Activated CD8-positive, alpha-beta T cell treated with anti-CD3 and anti-CD28 coated beads for 36 hours (primary cell): ENCODE measurements at regions of chr6 and their contacts with region 1.

Region 1: GRCh38 chr6:6676910-6677441 is 88.5 kb downstream of the LY86 start:
- DNase-seq: peak; percentile 87
- ATAC-seq: peak; percentile 93
- H3K4me3 Mint-ChIP-seq: peak overlapping the region; percentile 19
- H3K27ac Mint-ChIP-seq: no peak overlapping the region
- H3K4me1 Mint-ChIP-seq: peaks cover 6% of the 10 kb centered on the region
- H3K27me3 Mint-ChIP-seq: no peaks in the 10 kb centered on the region
- CTCF ChIP-seq: peak; percentile 98

Region 2: GRCh38 chr6:6474170-6474920 is 202.6 kb before region 1 on chr6:
- CTCF ChIA-PET with region 1: no interaction called
- POLR2A ChIA-PET with region 1: no interaction called
- intact Hi-C with region 1: no loop called
- DNase-seq: no peak
- ATAC-seq: no peak
- H3K4me3 Mint-ChIP-seq: no peak overlapping the region
- H3K27ac Mint-ChIP-seq: no peak overlapping the region
- H3K4me1 Mint-ChIP-seq: no peaks in the 10 kb centered on the region
- H3K27me3 Mint-ChIP-seq: peaks cover 7% of the 10 kb centered on the region
- CTCF ChIP-seq: no peak

Region 3: DNA sequence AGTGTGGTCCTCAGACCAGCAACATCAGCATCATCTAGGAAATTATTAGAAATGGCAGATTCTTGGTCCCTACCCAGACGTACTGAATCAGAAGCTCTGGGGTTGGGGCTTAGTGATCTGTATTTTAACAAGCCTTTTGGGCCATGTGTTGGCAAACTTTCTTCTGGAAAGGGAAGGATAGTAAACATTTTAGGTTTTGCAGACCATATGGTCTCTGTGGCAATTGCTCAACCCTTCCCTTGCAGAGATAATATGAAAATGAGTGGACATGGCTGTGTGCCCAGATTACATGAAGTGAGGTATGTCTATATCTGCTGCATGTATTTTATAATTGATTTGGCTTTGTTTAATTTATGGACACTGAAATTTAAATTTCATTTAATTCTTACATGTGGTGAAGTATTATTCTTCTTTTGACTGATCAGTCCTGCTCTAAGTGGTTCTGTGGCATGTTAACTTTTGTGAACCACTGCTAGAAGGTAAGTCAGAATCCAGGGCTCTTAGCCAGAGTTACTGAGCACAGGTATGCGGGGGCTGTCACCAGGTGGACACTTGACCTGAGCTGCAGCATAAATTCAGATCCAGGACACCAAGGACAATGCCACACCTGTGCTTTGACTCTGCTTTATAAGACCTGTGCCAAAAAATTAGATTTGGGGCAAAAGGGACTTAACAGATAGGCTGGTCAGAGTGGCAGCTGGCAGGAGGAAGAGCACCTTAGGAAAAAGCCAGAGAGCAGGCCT is 45.3 kb before region 1 on chr6:
- CTCF ChIA-PET with region 1: no interaction called
- POLR2A ChIA-PET with region 1: no interaction called
- intact Hi-C with region 1: no loop called
- DNase-seq: no peak
- ATAC-seq: no peak
- H3K4me3 Mint-ChIP-seq: no peak overlapping the region
- H3K27ac Mint-ChIP-seq: no peak overlapping the region
- H3K4me1 Mint-ChIP-seq: peaks cover 24% of the 10 kb centered on the region
- H3K27me3 Mint-ChIP-seq: no peaks in the 10 kb centered on the region
- CTCF ChIP-seq: no peak

Region 4: DNA sequence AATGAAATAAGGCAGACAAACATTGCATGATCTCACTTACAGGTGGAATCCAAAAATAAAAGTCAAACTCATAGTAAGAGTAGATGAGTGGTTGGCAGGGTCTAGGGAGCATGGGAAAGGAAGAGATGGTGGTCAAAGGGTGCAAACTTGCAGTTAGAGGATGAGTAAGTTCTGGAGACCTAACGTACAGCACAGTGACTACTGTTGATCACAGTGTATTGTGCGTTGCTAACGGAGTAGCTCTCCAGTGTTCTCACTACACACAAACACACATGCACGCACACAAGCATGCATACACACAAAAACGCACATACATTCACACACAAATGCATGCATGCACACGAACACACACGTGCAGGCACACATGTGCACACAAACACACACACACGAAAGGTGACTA is 33.6 kb before region 1 on chr6:
- CTCF ChIA-PET with region 1: no interaction called
- POLR2A ChIA-PET with region 1: no interaction called
- intact Hi-C with region 1: no loop called
- DNase-seq: no peak
- ATAC-seq: peak; percentile 72
- H3K4me3 Mint-ChIP-seq: no peak overlapping the region
- H3K27ac Mint-ChIP-seq: no peak overlapping the region
- H3K4me1 Mint-ChIP-seq: peaks cover 4% of the 10 kb centered on the region
- H3K27me3 Mint-ChIP-seq: no peaks in the 10 kb centered on the region
- CTCF ChIP-seq: no peak

Region 5: DNA sequence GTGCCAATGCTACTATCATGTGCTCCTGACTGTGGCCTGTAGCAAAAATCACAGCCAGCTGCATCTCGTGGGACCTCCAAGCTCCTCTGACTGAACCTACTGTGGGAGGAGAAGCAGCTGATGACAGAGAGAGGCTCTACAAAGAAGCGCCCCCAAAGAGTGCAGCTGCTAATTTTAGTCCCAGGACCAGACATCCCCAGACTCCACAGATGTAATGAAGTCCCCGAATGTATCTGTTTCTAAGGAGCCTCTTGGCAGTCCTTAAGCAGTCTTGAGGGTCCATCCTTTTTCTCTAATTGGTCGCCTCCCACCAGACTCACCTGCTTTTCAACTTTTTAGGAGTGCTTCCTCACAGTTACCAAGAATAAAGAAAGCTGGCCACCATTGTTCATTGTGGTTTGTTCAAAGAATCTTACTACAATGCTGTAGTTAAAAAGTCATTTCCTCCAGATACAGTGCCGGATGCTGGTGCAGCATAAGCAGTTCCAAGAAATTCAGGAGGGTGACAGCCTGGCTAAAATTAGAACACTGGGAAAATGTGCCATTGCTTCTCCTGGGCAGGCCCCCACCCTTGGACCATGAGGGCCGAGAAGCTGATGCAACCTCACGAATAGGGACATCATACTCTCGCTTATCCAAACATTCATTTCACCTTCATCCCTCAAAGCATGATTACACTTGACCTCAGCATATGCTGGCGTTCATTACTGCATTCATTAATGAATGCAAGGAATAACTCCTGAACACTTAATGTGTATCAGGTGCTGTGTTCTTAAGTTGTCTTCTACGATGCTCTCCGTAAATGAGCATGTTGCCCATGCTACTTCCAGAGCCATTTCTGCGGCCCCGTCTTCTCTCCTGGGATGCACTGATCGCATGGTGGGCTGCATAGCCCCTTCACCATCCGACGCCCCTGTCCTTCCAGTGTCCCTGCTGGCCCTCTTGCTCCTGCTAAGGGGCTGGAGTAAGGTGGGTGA is 22.1 kb before region 1 on chr6:
- CTCF ChIA-PET with region 1: interaction called, 71 read pairs
- POLR2A ChIA-PET with region 1: no interaction called
- intact Hi-C with region 1: no loop called
- DNase-seq: peak; percentile 72
- ATAC-seq: peak; percentile 68
- H3K4me3 Mint-ChIP-seq: peak overlapping the region; percentile 39
- H3K27ac Mint-ChIP-seq: peak overlapping the region; percentile 98
- H3K4me1 Mint-ChIP-seq: peaks cover 76% of the 10 kb centered on the region
- H3K27me3 Mint-ChIP-seq: no peaks in the 10 kb centered on the region
- CTCF ChIP-seq: no peak

Region 6: DNA sequence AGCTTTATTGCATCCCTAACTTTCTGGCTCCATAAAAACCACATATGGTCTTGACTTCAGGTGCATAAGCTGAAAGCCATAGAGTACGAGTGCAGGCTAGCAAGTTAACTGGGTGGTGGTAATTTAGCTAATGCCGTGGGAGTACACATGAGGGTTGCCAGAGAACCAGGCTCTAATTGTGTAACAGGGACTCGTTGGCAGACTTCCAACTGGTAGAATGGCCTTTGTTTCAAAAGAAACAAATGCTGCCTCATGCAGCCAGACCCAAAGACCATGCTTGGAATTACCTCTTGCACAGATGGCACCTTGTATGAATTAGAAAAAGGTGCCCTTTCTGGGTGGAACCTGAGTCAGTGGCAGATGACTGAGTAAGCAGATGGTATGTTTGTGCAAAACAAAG is 15.3 kb before region 1 on chr6:
- CTCF ChIA-PET with region 1: interaction called, 71 read pairs
- POLR2A ChIA-PET with region 1: no interaction called
- intact Hi-C with region 1: no loop called
- DNase-seq: no peak
- ATAC-seq: no peak
- H3K4me3 Mint-ChIP-seq: no peak overlapping the region
- H3K27ac Mint-ChIP-seq: no peak overlapping the region
- H3K4me1 Mint-ChIP-seq: peaks cover 33% of the 10 kb centered on the region
- H3K27me3 Mint-ChIP-seq: peaks cover 1% of the 10 kb centered on the region
- CTCF ChIP-seq: no peak

Region 7: GRCh38 chr6:6696867-6697531 is 20.0 kb after region 1 on chr6:
- CTCF ChIA-PET with region 1: interaction called, 14 read pairs
- POLR2A ChIA-PET with region 1: interaction called, 3 read pairs
- intact Hi-C with region 1: no loop called
- DNase-seq: peak; percentile 69
- ATAC-seq: peak; percentile 45
- H3K4me3 Mint-ChIP-seq: no peak overlapping the region
- H3K27ac Mint-ChIP-seq: no peak overlapping the region
- H3K4me1 Mint-ChIP-seq: no peaks in the 10 kb centered on the region
- H3K27me3 Mint-ChIP-seq: peaks cover 10% of the 10 kb centered on the region
- CTCF ChIP-seq: peak; percentile 73

Region 8: GRCh38 chr6:6724539-6725467 is 47.8 kb after region 1 on chr6:
- CTCF ChIA-PET with region 1: interaction called, 13 read pairs
- POLR2A ChIA-PET with region 1: no interaction called
- intact Hi-C with region 1: no loop called
- DNase-seq: peak; percentile 72
- ATAC-seq: peak; percentile 81
- H3K4me3 Mint-ChIP-seq: peak overlapping the region; percentile 20
- H3K27ac Mint-ChIP-seq: no peak overlapping the region
- H3K4me1 Mint-ChIP-seq: peaks cover 5% of the 10 kb centered on the region
- H3K27me3 Mint-ChIP-seq: peaks cover 8% of the 10 kb centered on the region
- CTCF ChIP-seq: peak; percentile 45

Region 9: DNA sequence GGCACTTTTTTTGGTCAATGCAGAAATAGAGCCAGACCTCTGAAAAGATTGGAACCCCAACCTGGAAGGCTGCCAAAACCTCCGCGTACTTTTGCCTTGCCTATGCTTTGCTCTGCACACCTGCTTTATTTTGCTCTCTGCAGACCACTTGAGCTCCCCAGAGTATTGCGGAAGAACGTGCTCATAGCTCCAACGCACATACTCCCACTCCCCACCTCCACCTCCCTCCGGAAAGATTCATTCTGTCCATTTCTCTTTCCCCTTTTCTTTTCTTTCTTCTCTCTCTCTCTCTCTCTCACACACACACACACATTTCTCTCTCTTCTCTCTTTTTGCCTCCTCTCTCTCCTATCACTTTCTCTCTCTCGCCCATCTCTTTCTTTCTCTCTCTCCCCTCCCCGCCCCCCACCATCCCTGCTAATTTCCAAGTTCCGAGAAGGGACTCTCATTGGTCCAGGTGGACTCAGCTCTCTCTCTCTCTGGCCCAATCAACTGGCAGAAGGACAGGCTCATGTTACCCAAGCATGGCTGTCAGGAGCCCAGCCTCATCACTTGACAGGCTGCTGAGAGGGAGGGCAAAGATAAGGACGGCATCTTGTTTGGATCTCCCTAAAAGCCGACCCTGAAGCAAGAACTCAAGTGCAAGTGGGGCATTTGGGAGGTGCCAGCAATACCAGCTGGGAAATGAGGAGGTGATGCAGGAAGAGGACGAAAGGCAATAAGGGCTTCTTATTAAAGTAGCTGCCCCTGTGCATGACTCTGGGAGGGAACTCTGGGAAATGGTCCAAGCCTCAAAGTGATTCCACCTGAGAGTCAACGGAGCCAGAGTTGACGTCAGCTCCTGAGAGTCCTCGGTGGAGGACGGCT is 157.6 kb after region 1 on chr6:
- CTCF ChIA-PET with region 1: no interaction called
- POLR2A ChIA-PET with region 1: no interaction called
- intact Hi-C with region 1: no loop called
- DNase-seq: no peak
- ATAC-seq: no peak
- H3K4me3 Mint-ChIP-seq: no peak overlapping the region
- H3K27ac Mint-ChIP-seq: no peak overlapping the region
- H3K4me1 Mint-ChIP-seq: no peaks in the 10 kb centered on the region
- H3K27me3 Mint-ChIP-seq: peaks cover 15% of the 10 kb centered on the region
- CTCF ChIP-seq: no peak